H1 (cell line): ENCODE measurements at regions of chr1 and their contacts with region 1.

Region 1: DNA sequence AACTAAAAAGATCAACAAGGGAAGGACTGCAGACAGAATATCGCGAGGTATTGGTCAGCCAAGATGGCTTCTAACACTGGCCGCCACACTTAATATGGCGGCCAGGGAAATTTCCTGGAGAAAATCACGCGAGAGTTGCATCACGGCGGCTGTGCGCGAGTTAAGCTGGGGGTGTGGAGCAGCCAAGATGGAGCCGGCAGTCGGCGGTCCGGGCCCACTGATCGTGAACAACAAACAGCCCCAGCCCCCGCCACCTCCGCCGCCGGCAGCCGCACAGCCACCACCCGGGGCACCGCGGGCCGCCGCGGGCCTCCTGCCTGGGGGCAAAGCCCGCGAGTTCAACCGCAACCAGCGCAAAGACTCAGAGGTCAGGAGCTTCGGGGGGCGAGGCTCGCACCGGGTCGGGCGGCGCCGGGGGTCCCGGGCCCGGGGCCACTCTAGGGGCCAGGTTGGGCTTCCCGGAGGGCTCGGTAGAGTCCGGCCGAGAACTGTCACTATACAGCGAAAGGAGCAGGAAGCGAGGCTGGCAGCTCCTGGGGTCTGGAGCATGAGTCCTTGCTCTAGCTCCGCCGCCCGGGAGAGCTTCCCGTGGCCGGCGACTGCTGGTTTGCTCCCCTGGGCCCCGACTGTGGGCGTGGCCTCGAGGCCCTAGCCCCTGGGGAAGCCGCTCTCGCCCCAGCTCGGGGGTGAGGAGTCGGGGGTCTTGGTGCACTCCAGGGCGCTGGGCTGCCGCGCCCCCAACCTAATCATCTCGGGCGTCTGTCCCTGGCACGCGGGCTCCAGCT is at the start of gene STRIP1:
- DNase-seq: peak; percentile 80 to 92
- H3K4me3 ChIP-seq: peak within 1 kb of the TSS; percentile 71 to 97 (median 81)
- H3K27ac ChIP-seq: peak within 1 kb of the TSS; percentile 52; the same call in 1 of the 2 replicates
- H3K4me1 ChIP-seq: peaks cover 0 to 9% (median 5%) of the 10 kb centered on the region in 4 experiments; a peak in 4 of 7 replicates
- H3K27me3 ChIP-seq: no peaks in the 10 kb centered on the region
- CTCF ChIP-seq: no peak
- EP300 ChIP-seq: no peak
- POLR2A ChIP-seq: peak; percentile 12 to 69
- RAD21 ChIP-seq: no peak
- total RNA-seq, gene STRIP1: 45.1 and 45.6 TPM in 2 replicates

Region 2: DNA sequence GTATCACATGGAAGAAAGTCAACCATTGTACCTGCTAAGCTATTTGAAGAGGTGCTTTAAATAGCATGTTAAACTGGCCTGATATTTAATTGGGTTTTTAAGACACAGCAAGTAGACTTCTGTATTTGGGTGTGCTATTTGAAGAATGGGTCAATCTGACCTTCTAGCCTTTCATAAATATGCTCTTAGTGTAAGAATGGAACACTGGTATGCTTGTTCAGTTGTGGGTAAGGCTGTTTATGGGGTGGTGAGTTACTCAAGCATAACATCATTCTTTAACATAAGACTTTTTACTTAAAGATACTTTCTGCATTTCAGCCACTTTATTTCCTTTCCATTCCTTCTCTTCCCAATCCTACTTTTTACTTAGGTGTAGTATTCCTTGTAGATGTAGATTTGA is 28.7 kb before region 1 on chr1:
- CTCF ChIA-PET with region 1: interaction called, 19 read pairs
- POLR2A ChIA-PET with region 1: no interaction called
- DNase-seq: no peak
- H3K4me3 ChIP-seq: no peak overlapping the region
- H3K27ac ChIP-seq: no peak overlapping the region
- H3K4me1 ChIP-seq: peaks cover 9 to 25% (median 19%) of the 10 kb centered on the region in 4 experiments; a peak in 6 of 7 replicates
- H3K27me3 ChIP-seq: no peaks in the 10 kb centered on the region
- CTCF ChIP-seq: no peak
- EP300 ChIP-seq: no peak
- POLR2A ChIP-seq: no peak
- RAD21 ChIP-seq: no peak

Region 3: GRCh38 chr1:110011527-110012041 is 23.1 kb before region 1 on chr1:
- CTCF ChIA-PET with region 1: interaction called, 19 read pairs
- POLR2A ChIA-PET with region 1: interaction called, 4 read pairs
- DNase-seq: peak in 1 of 2 experiments; percentile 49
- H3K4me3 ChIP-seq: no peak overlapping the region
- H3K27ac ChIP-seq: no peak overlapping the region
- H3K4me1 ChIP-seq: peaks cover 0 to 9% (median 5%) of the 10 kb centered on the region in 4 experiments; a peak in 3 of 7 replicates
- H3K27me3 ChIP-seq: no peaks in the 10 kb centered on the region
- CTCF ChIP-seq: peak; percentile 5 to 68 (median 47)
- EP300 ChIP-seq: no peak
- POLR2A ChIP-seq: no peak
- RAD21 ChIP-seq: peak; percentile 67 to 74

Region 4: GRCh38 chr1:110047471-110047870 is 12.8 kb after region 1 on chr1:
- CTCF ChIA-PET with region 1: interaction called, 150 read pairs
- POLR2A ChIA-PET with region 1: interaction called, 13 read pairs
- DNase-seq: no peak
- H3K4me3 ChIP-seq: no peak overlapping the region
- H3K27ac ChIP-seq: no peak overlapping the region
- H3K4me1 ChIP-seq: no peaks in the 10 kb centered on the region
- H3K27me3 ChIP-seq: no peaks in the 10 kb centered on the region
- CTCF ChIP-seq: peak in 2 of 3 experiments; percentile 28 to 29; a peak in 3 of 4 replicates
- EP300 ChIP-seq: no peak
- POLR2A ChIP-seq: no peak
- RAD21 ChIP-seq: 0 out of 4 replicates have a peak, but pooled peaks of 1 of the 2 experiments have one; percentile 2

Region 5: DNA sequence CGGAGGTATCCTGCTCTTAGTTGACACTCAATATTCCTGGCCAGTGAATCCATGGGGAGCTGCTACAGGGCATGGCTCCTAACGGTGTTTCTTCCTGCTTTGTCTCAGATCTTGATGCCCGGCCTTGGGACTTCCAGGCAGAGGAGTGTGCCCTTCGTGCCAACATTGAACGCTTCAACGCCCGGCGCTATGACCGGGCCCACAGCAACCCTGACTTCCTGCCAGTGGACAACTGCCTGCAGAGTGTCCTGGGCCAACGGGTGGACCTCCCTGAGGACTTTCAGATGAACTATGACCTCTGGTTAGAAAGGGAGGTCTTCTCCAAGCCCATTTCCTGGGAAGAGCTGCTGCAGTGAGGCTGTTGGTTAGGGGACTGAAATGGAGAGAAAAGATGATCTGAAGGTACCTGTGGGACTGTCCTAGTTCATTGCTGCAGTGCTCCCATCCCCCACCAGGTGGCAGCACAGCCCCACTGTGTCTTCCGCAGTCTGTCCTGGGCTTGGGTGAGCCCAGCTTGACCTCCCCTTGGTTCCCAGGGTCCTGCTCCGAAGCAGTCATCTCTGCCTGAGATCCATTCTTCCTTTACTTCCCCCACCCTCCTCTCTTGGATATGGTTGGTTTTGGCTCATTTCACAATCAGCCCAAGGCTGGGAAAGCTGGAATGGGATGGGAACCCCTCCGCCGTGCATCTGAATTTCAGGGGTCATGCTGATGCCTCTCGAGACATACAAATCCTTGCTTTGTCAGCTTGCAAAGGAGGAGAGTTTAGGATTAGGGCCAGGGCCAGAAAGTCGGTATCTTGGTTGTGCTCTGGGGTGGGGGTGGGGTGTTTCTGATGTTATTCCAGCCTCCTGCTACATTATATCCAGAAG is 19.1 kb after region 1 on chr1:
- CTCF ChIA-PET with region 1: interaction called, 1,450 read pairs
- POLR2A ChIA-PET with region 1: interaction called, 13 read pairs
- DNase-seq: peak in 1 of 2 experiments; percentile 97
- H3K4me3 ChIP-seq: no peak overlapping the region
- H3K27ac ChIP-seq: no peak overlapping the region
- H3K4me1 ChIP-seq: no peaks in the 10 kb centered on the region
- H3K27me3 ChIP-seq: no peaks in the 10 kb centered on the region
- CTCF ChIP-seq: peak; percentile 87 to 99 (median 99)
- EP300 ChIP-seq: no peak
- POLR2A ChIP-seq: no peak
- RAD21 ChIP-seq: peak; percentile 91 to 96

Region 6: GRCh38 chr1:110060034-110060661 is 25.5 kb after region 1 on chr1:
- CTCF ChIA-PET with region 1: interaction called, 1,450 read pairs
- POLR2A ChIA-PET with region 1: interaction called, 5 read pairs
- DNase-seq: peak in 1 of 2 experiments; percentile 94
- H3K4me3 ChIP-seq: no peak overlapping the region
- H3K27ac ChIP-seq: no peak overlapping the region
- H3K4me1 ChIP-seq: no peaks in the 10 kb centered on the region
- H3K27me3 ChIP-seq: peaks cover 0 to 8% (median 4%) of the 10 kb centered on the region in 4 experiments; a peak in 5 of 7 replicates
- CTCF ChIP-seq: peak; percentile 67 to 97 (median 97)
- EP300 ChIP-seq: no peak
- POLR2A ChIP-seq: no peak
- RAD21 ChIP-seq: peak in 1 of 2 experiments; percentile 38; a peak in 1 of 4 replicates

Region 7: GRCh38 chr1:110106013-110106941 is 71.6 kb after region 1 on chr1:
- CTCF ChIA-PET with region 1: interaction called, 1,450 read pairs
- POLR2A ChIA-PET with region 1: interaction called, 4 read pairs
- DNase-seq: peak; percentile 51 to 84
- H3K4me3 ChIP-seq: no peak overlapping the region
- H3K27ac ChIP-seq: no peak overlapping the region
- H3K4me1 ChIP-seq: no peaks in the 10 kb centered on the region
- H3K27me3 ChIP-seq: no peaks in the 10 kb centered on the region; a peak in 2 of 7 replicates
- CTCF ChIP-seq: peak; percentile 91 to 99 (median 97)
- EP300 ChIP-seq: no peak
- POLR2A ChIP-seq: no peak
- RAD21 ChIP-seq: peak; percentile 89 to 91

Region 8: GRCh38 chr1:110312188-110313121 is 277.8 kb after region 1 on chr1:
- CTCF ChIA-PET with region 1: no interaction called
- POLR2A ChIA-PET with region 1: no interaction called
- DNase-seq: peak; percentile 25 to 84
- H3K4me3 ChIP-seq: peak overlapping the region in 3 of 4 experiments; percentile 6 to 46 (median 29); a peak in 5 of 8 replicates
- H3K27ac ChIP-seq: no peak overlapping the region
- H3K4me1 ChIP-seq: peaks cover 0 to 7% (median 4%) of the 10 kb centered on the region in 4 experiments; a peak in 5 of 7 replicates
- H3K27me3 ChIP-seq: no peaks in the 10 kb centered on the region; a peak in 1 of 7 replicates
- CTCF ChIP-seq: peak; percentile 97 to 98 (median 98)
- EP300 ChIP-seq: no peak
- POLR2A ChIP-seq: no peak
- RAD21 ChIP-seq: peak; percentile 97 to 98